H1 (cell line): ENCODE measurements at regions of chr11 and their contacts with region 1.

Region 1: DNA sequence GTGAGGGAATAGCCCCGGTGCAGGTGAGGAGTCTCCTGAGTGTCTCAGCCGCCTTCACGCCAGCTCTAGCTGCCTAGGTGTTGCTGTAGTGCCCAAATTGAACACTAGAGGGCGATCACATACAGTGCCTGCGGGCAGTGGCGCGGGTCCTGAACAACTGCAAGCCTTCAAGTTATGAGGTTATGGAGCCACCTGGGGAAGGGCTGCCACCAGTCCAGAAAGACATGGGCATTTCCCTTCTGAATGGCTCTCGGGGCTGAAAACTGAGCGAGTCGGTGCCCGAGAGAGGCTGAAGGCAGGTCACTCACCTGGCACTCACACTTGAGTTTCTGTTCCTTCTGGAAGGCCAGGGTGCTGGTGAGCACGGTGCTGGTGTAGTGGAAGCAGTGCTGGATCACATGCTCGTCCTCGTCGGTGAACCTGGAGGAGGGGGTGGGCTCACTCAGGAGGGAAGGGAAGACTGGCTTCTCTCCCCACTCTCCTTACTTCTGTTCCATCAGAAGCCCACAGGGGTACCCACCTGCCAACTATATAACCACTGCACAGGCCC is 88.4 kb downstream of the PDE2A start:
- DNase-seq: peak in 1 of 2 experiments; percentile 82
- H3K4me3 ChIP-seq: no peak overlapping the region
- H3K27ac ChIP-seq: no peak overlapping the region
- H3K4me1 ChIP-seq: peaks cover 0 to 7% (median 3%) of the 10 kb centered on the region in 4 experiments; a peak in 4 of 7 replicates
- H3K27me3 ChIP-seq: peaks cover 24 to 73% (median 57%) of the 10 kb centered on the region in 4 experiments
- CTCF ChIP-seq: peak; percentile 84 to 94 (median 90)
- EP300 ChIP-seq: no peak
- POLR2A ChIP-seq: no peak
- RAD21 ChIP-seq: peak; percentile 87 to 89

Region 2: DNA sequence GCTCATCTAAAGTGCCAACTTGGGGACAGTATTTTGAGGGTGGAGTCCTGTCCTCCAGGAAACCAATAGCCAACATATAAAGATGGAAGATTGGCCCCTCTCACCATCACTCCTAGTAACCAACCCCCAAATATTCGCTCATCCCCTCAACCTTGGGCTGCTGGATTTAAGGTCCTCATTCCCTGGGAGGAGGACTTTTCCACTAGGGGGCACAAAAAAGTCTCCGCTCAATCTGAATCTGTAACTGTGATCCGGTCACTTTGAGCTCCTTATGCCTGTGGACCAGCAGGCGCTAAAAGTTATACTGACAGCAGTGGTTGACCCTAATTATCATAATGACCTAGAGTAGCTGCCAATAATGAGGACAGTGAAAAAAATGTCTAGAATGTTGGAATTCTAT is 131.0 kb before region 1 on chr11:
- CTCF ChIA-PET with region 1: interaction called, 15 read pairs
- POLR2A ChIA-PET with region 1: no interaction called
- DNase-seq: no peak
- H3K4me3 ChIP-seq: no peak overlapping the region
- H3K27ac ChIP-seq: no peak overlapping the region
- H3K4me1 ChIP-seq: no peaks in the 10 kb centered on the region
- H3K27me3 ChIP-seq: no peaks in the 10 kb centered on the region; a peak in 3 of 7 replicates
- CTCF ChIP-seq: peak; percentile 38 to 56 (median 43)
- EP300 ChIP-seq: no peak
- POLR2A ChIP-seq: no peak
- RAD21 ChIP-seq: peak; percentile 12 to 44; a peak in 2 of 4 replicates

Region 3: GRCh38 chr11:72534565-72535547 is 51.0 kb before region 1 on chr11:
- CTCF ChIA-PET with region 1: no interaction called
- POLR2A ChIA-PET with region 1: no interaction called
- DNase-seq: no peak
- H3K4me3 ChIP-seq: no peak overlapping the region
- H3K27ac ChIP-seq: no peak overlapping the region
- H3K4me1 ChIP-seq: peaks cover 4 to 9% (median 8%) of the 10 kb centered on the region in 4 experiments; a peak in 6 of 7 replicates
- H3K27me3 ChIP-seq: no peaks in the 10 kb centered on the region; a peak in 1 of 7 replicates
- CTCF ChIP-seq: peak; percentile 42 to 54 (median 45)
- EP300 ChIP-seq: no peak
- POLR2A ChIP-seq: no peak
- RAD21 ChIP-seq: peak in 1 of 2 experiments; percentile 30; a peak in 1 of 4 replicates

Region 4: GRCh38 chr11:72573072-72573854 is 12.6 kb before region 1 on chr11:
- CTCF ChIA-PET with region 1: interaction called, 62 read pairs
- POLR2A ChIA-PET with region 1: no interaction called
- DNase-seq: peak in 1 of 2 experiments; percentile 85
- H3K4me3 ChIP-seq: no peak overlapping the region
- H3K27ac ChIP-seq: no peak overlapping the region
- H3K4me1 ChIP-seq: no peaks in the 10 kb centered on the region
- H3K27me3 ChIP-seq: no peaks in the 10 kb centered on the region
- CTCF ChIP-seq: peak; percentile 78 to 94 (median 89)
- EP300 ChIP-seq: no peak
- POLR2A ChIP-seq: no peak
- RAD21 ChIP-seq: peak; percentile 77 to 81

Region 5: DNA sequence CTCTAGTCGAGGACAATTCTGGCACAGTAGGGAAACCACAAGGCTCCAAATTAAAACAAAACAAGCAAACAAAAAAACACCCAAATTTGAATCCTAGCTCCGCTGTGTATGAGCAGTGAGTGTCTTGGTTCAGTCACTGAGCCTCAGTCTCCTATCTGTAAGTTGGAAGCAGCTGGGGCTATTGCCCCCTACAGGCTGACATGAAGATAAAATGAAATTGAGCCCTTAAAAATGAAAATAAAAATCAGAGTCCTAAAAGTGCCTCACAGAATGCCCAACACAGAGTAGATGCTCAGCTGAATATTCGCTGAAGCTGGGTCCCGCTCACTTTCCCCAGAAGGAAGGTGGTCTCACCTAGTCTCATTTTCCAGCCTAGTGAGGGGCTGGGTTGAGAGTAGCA is 23.2 kb after region 1 on chr11:
- CTCF ChIA-PET with region 1: interaction called, 145 read pairs
- POLR2A ChIA-PET with region 1: no interaction called
- DNase-seq: no peak
- H3K4me3 ChIP-seq: no peak overlapping the region
- H3K27ac ChIP-seq: no peak overlapping the region
- H3K4me1 ChIP-seq: no peaks in the 10 kb centered on the region
- H3K27me3 ChIP-seq: no peaks in the 10 kb centered on the region; a peak in 1 of 7 replicates
- CTCF ChIP-seq: peak in 2 of 3 experiments; percentile 55 to 58; a peak in 3 of 4 replicates
- EP300 ChIP-seq: no peak
- POLR2A ChIP-seq: no peak
- RAD21 ChIP-seq: peak in 1 of 2 experiments; percentile 39; a peak in 1 of 4 replicates

Region 6: GRCh38 chr11:72676861-72677341 is 91.1 kb after region 1 on chr11:
- CTCF ChIA-PET with region 1: interaction called, 384 read pairs
- POLR2A ChIA-PET with region 1: interaction called, 10 read pairs
- DNase-seq: peak in 1 of 2 experiments; percentile 94
- H3K4me3 ChIP-seq: peak overlapping the region in 1 of 4 experiments; percentile 23; a peak in 2 of 8 replicates
- H3K27ac ChIP-seq: no peak overlapping the region
- H3K4me1 ChIP-seq: peaks cover 0 to 21% (median 16%) of the 10 kb centered on the region in 4 experiments; a peak in 6 of 7 replicates
- H3K27me3 ChIP-seq: peaks cover 0 to 39% (median 30%) of the 10 kb centered on the region in 4 experiments; a peak in 6 of 7 replicates
- CTCF ChIP-seq: no peak
- EP300 ChIP-seq: no peak
- POLR2A ChIP-seq: peak in 1 of 2 experiments; percentile 46; a peak in 1 of 3 replicates
- RAD21 ChIP-seq: no peak; a peak in 1 of 4 replicates

Region 7: GRCh38 chr11:72751285-72752087 is 165.6 kb after region 1 on chr11:
- CTCF ChIA-PET with region 1: no interaction called
- POLR2A ChIA-PET with region 1: no interaction called
- DNase-seq: no peak
- H3K4me3 ChIP-seq: peak overlapping the region; percentile 54 to 80 (median 64)
- H3K27ac ChIP-seq: no peak overlapping the region
- H3K4me1 ChIP-seq: peaks cover 0 to 22% (median 12%) of the 10 kb centered on the region in 4 experiments; a peak in 6 of 7 replicates
- H3K27me3 ChIP-seq: peaks cover 0 to 10% (median 5%) of the 10 kb centered on the region in 4 experiments; a peak in 3 of 7 replicates
- CTCF ChIP-seq: no peak
- EP300 ChIP-seq: no peak
- POLR2A ChIP-seq: no peak
- RAD21 ChIP-seq: no peak

Region 8: GRCh38 chr11:72762641-72763304 is 176.9 kb after region 1 on chr11:
- CTCF ChIA-PET with region 1: no interaction called
- POLR2A ChIA-PET with region 1: no interaction called
- DNase-seq: no peak
- H3K4me3 ChIP-seq: no peak overlapping the region
- H3K27ac ChIP-seq: no peak overlapping the region
- H3K4me1 ChIP-seq: peaks cover 0 to 14% (median 8%) of the 10 kb centered on the region in 4 experiments; a peak in 6 of 7 replicates
- H3K27me3 ChIP-seq: no peaks in the 10 kb centered on the region
- CTCF ChIP-seq: no peak
- EP300 ChIP-seq: no peak
- POLR2A ChIP-seq: no peak
- RAD21 ChIP-seq: no peak